ENCODE measurements at regions of chr15 and their contacts with region 1.

Region 1: GRCh38 chr15:51649659-51650521 is 27.3 kb upstream of the DMXL2 start:
- DNase-seq: peak; percentile 72
- ATAC-seq: peak; percentile 83
- H3K4me3 Mint-ChIP-seq: no peak overlapping the region
- H3K27ac Mint-ChIP-seq: no peak overlapping the region
- H3K4me1 Mint-ChIP-seq: peaks cover 6% of the 10 kb centered on the region
- H3K27me3 Mint-ChIP-seq: peaks cover 9% of the 10 kb centered on the region

Region 2: GRCh38 chr15:51524376-51524775 is 125.5 kb before region 1 on chr15:
- CTCF ChIA-PET with region 1: no interaction called
- POLR2A ChIA-PET with region 1: no interaction called
- DNase-seq: no peak
- ATAC-seq: no peak
- H3K4me3 Mint-ChIP-seq: no peak overlapping the region
- H3K27ac Mint-ChIP-seq: no peak overlapping the region
- H3K4me1 Mint-ChIP-seq: no peaks in the 10 kb centered on the region
- H3K27me3 Mint-ChIP-seq: no peaks in the 10 kb centered on the region

Region 3: GRCh38 chr15:51737280-51738017 is 87.6 kb after region 1 on chr15 and contains the start of gene LYSMD2:
- CTCF ChIA-PET with region 1: interaction called, 51 read pairs
- POLR2A ChIA-PET with region 1: no interaction called
- DNase-seq: peak; percentile 69
- ATAC-seq: peak; percentile 74
- H3K4me3 Mint-ChIP-seq: peak within 1 kb of the TSS; percentile 82
- H3K27ac Mint-ChIP-seq: peak within 1 kb of the TSS; percentile 90
- H3K4me1 Mint-ChIP-seq: peaks cover 49% of the 10 kb centered on the region
- H3K27me3 Mint-ChIP-seq: no peaks in the 10 kb centered on the region
- total RNA-seq, gene LYSMD2: 20.6 to 21.9 TPM

Region 4: DNA sequence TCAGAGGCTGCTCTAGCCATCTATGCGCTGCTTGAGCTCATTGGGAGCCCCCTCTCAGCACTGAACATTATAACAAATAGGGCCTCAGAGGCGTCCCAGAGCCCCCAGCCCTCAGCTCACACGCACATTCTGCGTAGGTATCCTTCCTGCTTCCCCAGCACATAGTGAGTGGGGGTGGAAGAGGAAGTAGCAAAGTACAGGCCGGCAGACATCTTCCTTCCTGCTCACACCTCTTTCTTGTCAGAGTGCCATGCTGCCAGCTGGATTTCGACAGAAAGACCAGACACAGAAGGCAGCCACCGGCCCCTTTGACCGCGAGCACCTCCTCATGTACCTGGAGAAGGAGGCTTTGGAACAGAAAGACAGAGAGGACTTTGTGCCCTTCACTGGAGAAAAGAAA is 118.1 kb after region 1 on chr15:
- CTCF ChIA-PET with region 1: interaction called, 164 read pairs
- POLR2A ChIA-PET with region 1: no interaction called
- DNase-seq: peak; percentile 21
- ATAC-seq: no peak
- H3K4me3 Mint-ChIP-seq: no peak overlapping the region
- H3K27ac Mint-ChIP-seq: peak overlapping the region; percentile 76
- H3K4me1 Mint-ChIP-seq: peaks cover 13% of the 10 kb centered on the region
- H3K27me3 Mint-ChIP-seq: no peaks in the 10 kb centered on the region

Region 5: GRCh38 chr15:51782357-51782896 is 132.5 kb after region 1 on chr15:
- CTCF ChIA-PET with region 1: interaction called, 164 read pairs
- POLR2A ChIA-PET with region 1: interaction called, 4 read pairs
- DNase-seq: no peak
- ATAC-seq: no peak
- H3K4me3 Mint-ChIP-seq: no peak overlapping the region
- H3K27ac Mint-ChIP-seq: no peak overlapping the region
- H3K4me1 Mint-ChIP-seq: peaks cover 3% of the 10 kb centered on the region
- H3K27me3 Mint-ChIP-seq: no peaks in the 10 kb centered on the region